Activated CD4-positive, alpha-beta T cell treated with anti-CD3 and anti-CD28 coated beads for 36 hours (primary cell): ENCODE measurements at regions of chr16 and their contacts with region 1.

Region 1: DNA sequence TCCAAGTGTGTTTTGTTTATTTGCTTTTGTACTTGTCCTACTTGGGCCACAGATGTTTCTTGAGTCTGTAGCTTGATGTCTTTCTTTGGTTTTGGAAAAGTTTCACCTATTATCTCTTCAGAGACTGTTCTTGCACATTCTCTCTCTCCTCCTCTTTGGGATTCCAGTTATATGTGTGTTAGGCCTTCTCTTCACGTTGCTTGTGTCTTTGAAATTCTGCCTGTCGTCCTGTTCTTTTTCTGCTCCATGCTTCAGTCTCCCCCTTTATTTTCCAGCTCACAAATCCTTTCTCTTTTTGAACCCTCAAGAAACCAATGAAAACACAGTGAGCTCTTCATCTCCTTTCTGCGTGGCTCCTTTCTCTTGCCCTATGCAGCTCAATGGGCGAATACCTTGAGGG is 7.9 kb downstream of the VPS35L start:
- DNase-seq: no peak
- ATAC-seq: no peak
- H3K4me3 Mint-ChIP-seq: no peak overlapping the region
- H3K27ac Mint-ChIP-seq: no peak overlapping the region
- H3K4me1 Mint-ChIP-seq: no peaks in the 10 kb centered on the region
- H3K27me3 Mint-ChIP-seq: no peaks in the 10 kb centered on the region

Region 2: GRCh38 chr16:19446300-19446846 is 117.0 kb before region 1 on chr16:
- CTCF ChIA-PET with region 1: no interaction called
- POLR2A ChIA-PET with region 1: no interaction called
- intact Hi-C with region 1: no loop called
- DNase-seq: no peak
- ATAC-seq: no peak
- H3K4me3 Mint-ChIP-seq: no peak overlapping the region
- H3K27ac Mint-ChIP-seq: no peak overlapping the region
- H3K4me1 Mint-ChIP-seq: no peaks in the 10 kb centered on the region
- H3K27me3 Mint-ChIP-seq: peaks cover 20% of the 10 kb centered on the region

Region 3: DNA sequence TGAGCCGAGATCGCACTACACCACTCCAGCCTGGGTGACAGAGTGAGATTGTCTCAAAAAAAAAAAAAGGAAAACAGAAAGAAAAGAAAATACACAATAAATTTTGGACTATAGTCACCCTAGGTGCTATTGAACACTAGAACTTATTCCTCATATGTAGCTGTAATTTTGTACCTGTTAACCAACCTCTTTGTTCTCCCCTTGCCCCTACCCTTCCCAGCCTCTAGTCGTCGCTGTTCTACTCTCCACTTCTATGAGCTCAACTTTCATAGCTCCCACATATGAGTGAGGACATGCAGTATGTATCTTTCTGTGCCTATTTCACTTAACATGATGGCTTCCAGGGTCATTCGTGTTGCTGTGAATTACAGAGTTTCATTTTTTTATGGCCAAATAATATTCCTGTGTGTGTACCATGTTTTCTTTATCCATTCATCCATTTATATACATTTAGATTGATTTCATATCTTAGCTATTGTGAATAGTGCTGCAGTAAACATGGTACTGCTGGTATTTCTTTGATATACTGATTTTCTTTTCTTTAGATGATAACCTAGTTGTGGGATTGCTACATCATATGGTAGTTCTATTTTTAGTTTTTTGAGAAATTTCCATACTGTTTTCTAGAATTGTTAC is 20.4 kb after region 1 on chr16:
- CTCF ChIA-PET with region 1: interaction called, 16 read pairs
- POLR2A ChIA-PET with region 1: no interaction called
- intact Hi-C with region 1: no loop called
- DNase-seq: peak; percentile 39
- ATAC-seq: peak; percentile 82
- H3K4me3 Mint-ChIP-seq: no peak overlapping the region
- H3K27ac Mint-ChIP-seq: no peak overlapping the region
- H3K4me1 Mint-ChIP-seq: peaks cover 17% of the 10 kb centered on the region
- H3K27me3 Mint-ChIP-seq: no peaks in the 10 kb centered on the region

Region 4: GRCh38 chr16:19802612-19803011 is 239.2 kb after region 1 on chr16:
- CTCF ChIA-PET with region 1: no interaction called
- POLR2A ChIA-PET with region 1: no interaction called
- intact Hi-C with region 1: no loop called
- DNase-seq: no peak
- ATAC-seq: no peak
- H3K4me3 Mint-ChIP-seq: no peak overlapping the region
- H3K27ac Mint-ChIP-seq: no peak overlapping the region
- H3K4me1 Mint-ChIP-seq: peaks cover 13% of the 10 kb centered on the region
- H3K27me3 Mint-ChIP-seq: no peaks in the 10 kb centered on the region